BJ (cell line): ENCODE measurements at regions of chr12 and their contacts with region 1.

Region 1: GRCh38 chr12:132614861-132615578 is 3.6 kb upstream of the P2RX2 start:
- DNase-seq: no peak
- H3K4me3 ChIP-seq: no peak overlapping the region
- H3K27me3 ChIP-seq: peaks cover 25% of the 10 kb centered on the region
- CTCF ChIP-seq: peak; percentile 90

Region 2: DNA sequence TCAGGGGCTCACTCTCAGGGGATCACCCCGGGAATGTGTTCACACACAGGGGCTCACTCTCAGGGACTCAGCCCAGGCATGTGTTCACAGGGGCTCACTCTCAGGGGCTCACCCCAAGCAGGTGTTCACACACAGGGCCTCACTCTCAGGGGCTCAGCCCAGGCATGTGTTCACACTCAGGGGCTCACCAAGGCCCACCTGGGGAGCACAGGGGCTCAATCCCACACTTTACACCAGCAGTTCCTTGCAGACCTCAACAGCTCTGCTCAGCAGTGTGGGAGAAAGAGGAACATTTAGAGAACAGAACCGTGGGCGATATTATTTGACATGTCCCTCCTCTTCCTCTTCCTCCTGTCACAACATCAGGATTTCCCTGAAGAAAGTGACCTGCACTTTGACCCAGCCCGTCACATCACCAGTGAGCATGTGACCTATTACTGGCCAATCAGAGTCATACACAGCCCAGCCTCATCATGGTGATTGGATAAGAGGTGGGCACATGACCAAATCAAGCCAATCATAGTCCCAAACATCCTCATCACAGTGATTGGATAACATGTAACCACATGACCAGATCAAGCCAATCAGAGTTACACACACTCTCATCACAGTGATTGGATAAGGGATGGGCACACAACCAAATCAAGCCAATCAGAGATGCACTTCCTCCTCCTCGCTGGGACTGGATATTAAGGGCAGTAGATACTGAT is 1263.5 kb before region 1 on chr12:
- CTCF ChIA-PET with region 1: no interaction called
- POLR2A ChIA-PET with region 1: no interaction called
- DNase-seq: no peak
- H3K4me3 ChIP-seq: no peak overlapping the region
- H3K27me3 ChIP-seq: no peaks in the 10 kb centered on the region
- CTCF ChIP-seq: no peak

Region 3: GRCh38 chr12:132153501-132154340 is 461.3 kb before region 1 on chr12:
- CTCF ChIA-PET with region 1: interaction called, 17 read pairs
- POLR2A ChIA-PET with region 1: no interaction called
- DNase-seq: no peak
- H3K4me3 ChIP-seq: no peak overlapping the region
- H3K27me3 ChIP-seq: no peaks in the 10 kb centered on the region
- CTCF ChIP-seq: peak; percentile 98

Region 4: GRCh38 chr12:132489602-132490239 is 125.3 kb before region 1 on chr12 and contains the start of gene FBRSL1:
- CTCF ChIA-PET with region 1: no interaction called
- POLR2A ChIA-PET with region 1: no interaction called
- DNase-seq: peak; percentile 10
- H3K4me3 ChIP-seq: peak within 1 kb of the TSS; percentile 78
- H3K27me3 ChIP-seq: no peaks in the 10 kb centered on the region; the same call in none of the 2 replicates
- CTCF ChIP-seq: no peak
- polyA plus RNA-seq, gene FBRSL1: 1.0 and 1.4 TPM in 2 replicates

Region 5: GRCh38 chr12:132588821-132589669 is 26.0 kb before region 1 on chr12:
- CTCF ChIA-PET with region 1: no interaction called
- POLR2A ChIA-PET with region 1: no interaction called
- DNase-seq: no peak
- H3K4me3 ChIP-seq: no peak overlapping the region
- H3K27me3 ChIP-seq: no peaks in the 10 kb centered on the region
- CTCF ChIP-seq: no peak

Region 6: GRCh38 chr12:132600048-132601032 is 14.7 kb before region 1 on chr12:
- CTCF ChIA-PET with region 1: interaction called, 42 read pairs
- POLR2A ChIA-PET with region 1: no interaction called
- DNase-seq: no peak
- H3K4me3 ChIP-seq: peak overlapping the region; percentile 43
- H3K27me3 ChIP-seq: peaks cover 23% of the 10 kb centered on the region
- CTCF ChIP-seq: peak; percentile 84

Region 7: GRCh38 chr12:132632501-132633228 is 17.6 kb after region 1 on chr12:
- CTCF ChIA-PET with region 1: interaction called, 15 read pairs
- POLR2A ChIA-PET with region 1: no interaction called
- DNase-seq: no peak
- H3K4me3 ChIP-seq: no peak overlapping the region
- H3K27me3 ChIP-seq: no peaks in the 10 kb centered on the region
- CTCF ChIP-seq: no peak

Region 8: DNA sequence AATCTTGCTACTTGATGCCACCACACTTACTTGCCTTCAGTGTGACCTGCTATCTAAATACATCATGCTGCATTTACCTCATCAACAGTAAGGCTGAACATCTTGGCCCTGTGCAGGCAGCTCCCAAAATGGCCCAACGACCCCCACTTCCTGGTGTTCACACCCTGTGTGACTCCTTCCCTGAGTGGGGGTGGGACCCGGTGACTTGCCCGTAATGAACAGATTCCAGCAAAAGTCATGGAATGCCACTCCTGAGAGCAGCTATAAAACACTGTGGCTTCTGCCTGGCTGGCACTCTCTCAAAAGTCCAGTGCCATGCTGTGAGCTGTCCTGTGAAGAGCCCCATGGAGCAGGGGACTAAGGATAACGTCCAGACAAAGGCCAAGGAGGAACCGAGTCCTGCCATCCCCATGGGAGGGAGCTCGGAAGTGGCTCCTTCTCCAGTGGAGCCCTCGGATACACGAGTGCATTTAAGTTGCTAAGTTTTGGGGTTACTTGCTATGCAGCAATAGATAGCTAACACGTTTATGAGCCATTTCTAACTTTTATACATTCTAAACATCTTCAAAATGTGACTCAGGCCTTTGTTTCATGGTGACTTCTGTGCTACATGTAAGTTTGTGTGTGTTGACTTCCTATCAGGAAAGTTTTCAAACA is 36.6 kb after region 1 on chr12:
- CTCF ChIA-PET with region 1: no interaction called
- POLR2A ChIA-PET with region 1: no interaction called
- DNase-seq: no peak
- H3K4me3 ChIP-seq: no peak overlapping the region
- H3K27me3 ChIP-seq: no peaks in the 10 kb centered on the region
- CTCF ChIP-seq: no peak